Activated T-helper 1 cell treated with anti-CD3 and anti-CD28 coated beads, Interleukin-12 subunit alpha, Interleukin-12 subunit beta, Interleukin-2, Interleukin-4 antibody, amounts not matched to agents 30 ng/mL and 10 ng/mL and 1 ng/mL, durations not matched to agents 14 hours and 24 hours and 36 hours (primary cell): ENCODE measurements at regions of chr6 and their contacts with region 1.

Region 1: GRCh38 chr6:24949020-24949569 is 13.3 kb upstream of the RIPOR2 start:
- DNase-seq: peak; percentile 68
- H3K4me3 Mint-ChIP-seq: peak overlapping the region; percentile 65
- H3K27ac Mint-ChIP-seq: peak overlapping the region; percentile 95
- H3K4me1 Mint-ChIP-seq: peaks cover 76% of the 10 kb centered on the region
- H3K27me3 Mint-ChIP-seq: no peaks in the 10 kb centered on the region

Region 2: DNA sequence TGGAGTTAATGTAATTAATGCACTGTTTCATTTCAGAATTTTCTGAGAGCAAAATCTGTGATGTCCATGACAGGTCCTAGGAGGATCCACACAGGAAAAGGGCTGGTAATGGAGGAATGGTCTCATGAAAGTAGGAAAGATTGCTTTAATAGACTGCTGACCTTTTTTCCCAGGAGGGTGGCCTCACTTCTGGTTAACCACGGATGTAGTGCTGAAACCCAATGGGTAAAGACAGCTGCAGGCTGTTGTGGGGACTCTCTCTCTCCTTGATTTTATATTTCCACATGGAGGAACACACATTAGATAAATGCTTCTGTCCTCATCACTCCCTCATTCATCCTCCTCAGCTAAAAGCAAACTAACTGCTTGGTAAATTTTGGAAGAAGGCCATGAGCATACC is 10.2 kb after region 1 on chr6:
- intact Hi-C with region 1: loop called (anchors 1 kb)
- DNase-seq: no peak
- H3K4me3 Mint-ChIP-seq: peak overlapping the region; percentile 47
- H3K27ac Mint-ChIP-seq: no peak overlapping the region
- H3K4me1 Mint-ChIP-seq: peaks cover 69% of the 10 kb centered on the region
- H3K27me3 Mint-ChIP-seq: no peaks in the 10 kb centered on the region

Region 3: DNA sequence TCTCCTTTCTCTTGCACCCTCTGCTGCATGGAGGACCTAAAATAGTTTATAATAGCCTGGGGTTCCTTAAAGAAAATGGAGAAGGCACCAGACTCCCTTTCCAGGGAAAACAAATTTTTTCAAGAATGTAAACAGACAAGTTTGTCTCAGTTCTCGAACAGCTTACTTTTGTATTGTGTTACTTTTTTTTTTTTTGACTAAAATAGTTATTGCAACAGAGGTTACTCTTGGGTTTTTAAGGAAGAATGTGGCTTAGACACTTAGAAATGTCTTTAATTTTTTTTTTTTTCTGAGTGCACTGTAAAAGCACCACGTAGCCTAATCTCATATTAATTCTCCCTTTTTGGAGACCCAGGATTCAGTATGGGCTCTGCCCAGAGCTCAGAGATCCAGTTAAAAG is 181.4 kb after region 1 on chr6:
- intact Hi-C with region 1: no loop called
- DNase-seq: no peak
- H3K4me3 Mint-ChIP-seq: peak overlapping the region; percentile 59
- H3K27ac Mint-ChIP-seq: peak overlapping the region; percentile 75
- H3K4me1 Mint-ChIP-seq: peaks cover 62% of the 10 kb centered on the region
- H3K27me3 Mint-ChIP-seq: no peaks in the 10 kb centered on the region